Prostate gland (tissue), 2 donors: ENCODE measurements at regions of chr2 and their contacts with region 1.

Region 1: GRCh38 chr2:96265840-96266679 is at the starts of genes CIAO1 and TMEM127:
- DNase-seq: peak; percentile 98
- H3K4me3 ChIP-seq: peak within 1 kb of the TSS; percentile 96 to 97
- H3K27ac ChIP-seq: peak within 1 kb of the TSS; percentile 79 to 80
- H3K4me1 ChIP-seq: peaks cover 9% of the 10 kb centered on the region
- H3K27me3 ChIP-seq: no peaks in the 10 kb centered on the region
- CTCF ChIP-seq: peak in 2 of 4 experiments; percentile 35 to 41
- POLR2A ChIP-seq: peak; percentile 92
- total RNA-seq, gene CIAO1: 108 to 135 TPM
- total RNA-seq, gene TMEM127: 40.4 to 50.4 TPM

Region 2: GRCh38 chr2:96208143-96209010 is 57.7 kb before region 1 on chr2 and contains the start of gene STARD7:
- intact Hi-C with region 1: loop called (anchors 2 kb)
- DNase-seq: peak; percentile 98
- H3K4me3 ChIP-seq: peak within 1 kb of the TSS; percentile 92 to 97
- H3K27ac ChIP-seq: peak within 1 kb of the TSS; percentile 91 to 93
- H3K4me1 ChIP-seq: peaks cover 12% of the 10 kb centered on the region
- H3K27me3 ChIP-seq: no peaks in the 10 kb centered on the region
- CTCF ChIP-seq: peak; percentile 8 to 36 (median 18)
- POLR2A ChIP-seq: peak; percentile 92
- total RNA-seq, gene STARD7: 93.1 to 141 TPM

Region 3: GRCh38 chr2:96305091-96305978 is 39.3 kb after region 1 on chr2 and contains the start of gene SNRNP200:
- intact Hi-C with region 1: loop called (anchors 2 kb)
- DNase-seq: peak; percentile 84
- H3K4me3 ChIP-seq: peak within 1 kb of the TSS; percentile 67 to 72
- H3K27ac ChIP-seq: peak within 1 kb of the TSS; percentile 72 to 77
- H3K4me1 ChIP-seq: peaks cover 8% of the 10 kb centered on the region
- H3K27me3 ChIP-seq: no peaks in the 10 kb centered on the region
- CTCF ChIP-seq: peak in 1 of 4 experiments; percentile 24
- POLR2A ChIP-seq: peak; percentile 62
- total RNA-seq, gene SNRNP200: 117 to 148 TPM

Region 4: GRCh38 chr2:96687266-96687665 is 421.2 kb after region 1 on chr2:
- intact Hi-C with region 1: no loop called
- DNase-seq: no peak
- H3K4me3 ChIP-seq: no peak overlapping the region
- H3K27ac ChIP-seq: no peak overlapping the region
- H3K4me1 ChIP-seq: peaks cover 2% of the 10 kb centered on the region
- H3K27me3 ChIP-seq: no peaks in the 10 kb centered on the region
- CTCF ChIP-seq: no peak
- POLR2A ChIP-seq: no peak